A549 (cell line): ENCODE measurements at regions of chr20 and their contacts with region 1.

Region 1: DNA sequence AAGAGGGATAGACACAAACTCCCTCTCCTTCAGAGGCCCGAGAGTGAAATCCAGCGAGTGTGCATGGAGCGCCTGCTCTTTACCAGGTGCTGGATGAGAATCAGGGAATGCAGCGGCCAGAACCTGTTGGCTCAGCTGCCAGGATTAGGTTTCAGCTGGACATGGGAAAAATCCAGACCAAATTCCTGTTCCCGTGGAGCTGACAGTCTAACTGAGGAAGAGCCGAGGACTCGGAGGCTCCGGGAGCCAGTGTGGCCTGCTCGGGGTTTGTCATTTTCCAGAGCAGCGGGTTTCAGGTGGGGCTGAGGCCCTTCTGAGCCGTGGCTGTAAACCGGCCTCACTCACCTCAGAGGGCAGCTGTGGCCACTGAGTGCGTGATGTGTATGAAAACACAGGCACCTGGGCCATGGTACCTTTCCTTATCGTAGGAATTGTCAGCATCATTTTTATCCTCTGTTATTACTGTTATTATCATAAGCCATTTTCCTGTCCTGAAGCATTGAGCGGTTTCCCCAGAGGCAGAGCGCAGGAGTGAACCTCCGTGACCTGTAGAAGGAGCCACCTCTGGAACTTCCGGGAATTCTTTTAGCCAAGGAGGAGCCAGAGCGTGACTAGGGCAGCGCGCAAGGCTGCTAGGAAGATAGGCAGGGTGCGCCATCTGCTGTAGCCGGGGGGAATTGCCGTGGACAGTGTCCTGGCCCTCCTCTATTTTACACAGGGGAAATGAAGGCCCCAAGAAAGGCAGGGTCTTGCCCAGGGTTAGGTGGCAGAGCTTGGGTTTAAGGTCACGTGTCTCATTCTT is 27.3 kb downstream of the PKIG start:
- DNase-seq: peak; percentile 91 to 95
- ATAC-seq: peak; percentile 98 to 99
- H3K4me3 ChIP-seq: peak overlapping the region; percentile 29; the same call in 1 of the 3 replicates
- H3K27ac ChIP-seq: peak overlapping the region; percentile 76 to 85
- H3K4me1 ChIP-seq: peaks cover 11% of the 10 kb centered on the region
- CTCF ChIP-seq: peak; percentile 89
- EP300 ChIP-seq: no peak
- POLR2A ChIP-seq: peak; percentile 39; the same call in 1 of the 2 replicates
- RAD21 ChIP-seq: peak; percentile 96 to 98

Region 2: GRCh38 chr20:44475694-44476560 is 133.8 kb before region 1 on chr20 and contains the start of gene TTPAL:
- CTCF ChIA-PET with region 1: interaction called, 25 read pairs
- POLR2A ChIA-PET with region 1: interaction called, 13 read pairs
- DNase-seq: peak; percentile 81 to 88
- ATAC-seq: peak; percentile 98
- H3K4me3 ChIP-seq: peak within 1 kb of the TSS; percentile 92
- H3K27ac ChIP-seq: peak within 1 kb of the TSS; percentile 91 to 95
- H3K4me1 ChIP-seq: peaks cover 12% of the 10 kb centered on the region; the same call in 2 of the 3 replicates
- CTCF ChIP-seq: peak; percentile 20; the same call in 2 of the 3 replicates
- EP300 ChIP-seq: no peak
- POLR2A ChIP-seq: peak; percentile 99
- RAD21 ChIP-seq: peak; percentile 9 to 48; a peak in 2 of 5 replicates
- polyA plus RNA-seq, gene TTPAL: 9.2 and 11.0 TPM in 2 replicates

Region 3: DNA sequence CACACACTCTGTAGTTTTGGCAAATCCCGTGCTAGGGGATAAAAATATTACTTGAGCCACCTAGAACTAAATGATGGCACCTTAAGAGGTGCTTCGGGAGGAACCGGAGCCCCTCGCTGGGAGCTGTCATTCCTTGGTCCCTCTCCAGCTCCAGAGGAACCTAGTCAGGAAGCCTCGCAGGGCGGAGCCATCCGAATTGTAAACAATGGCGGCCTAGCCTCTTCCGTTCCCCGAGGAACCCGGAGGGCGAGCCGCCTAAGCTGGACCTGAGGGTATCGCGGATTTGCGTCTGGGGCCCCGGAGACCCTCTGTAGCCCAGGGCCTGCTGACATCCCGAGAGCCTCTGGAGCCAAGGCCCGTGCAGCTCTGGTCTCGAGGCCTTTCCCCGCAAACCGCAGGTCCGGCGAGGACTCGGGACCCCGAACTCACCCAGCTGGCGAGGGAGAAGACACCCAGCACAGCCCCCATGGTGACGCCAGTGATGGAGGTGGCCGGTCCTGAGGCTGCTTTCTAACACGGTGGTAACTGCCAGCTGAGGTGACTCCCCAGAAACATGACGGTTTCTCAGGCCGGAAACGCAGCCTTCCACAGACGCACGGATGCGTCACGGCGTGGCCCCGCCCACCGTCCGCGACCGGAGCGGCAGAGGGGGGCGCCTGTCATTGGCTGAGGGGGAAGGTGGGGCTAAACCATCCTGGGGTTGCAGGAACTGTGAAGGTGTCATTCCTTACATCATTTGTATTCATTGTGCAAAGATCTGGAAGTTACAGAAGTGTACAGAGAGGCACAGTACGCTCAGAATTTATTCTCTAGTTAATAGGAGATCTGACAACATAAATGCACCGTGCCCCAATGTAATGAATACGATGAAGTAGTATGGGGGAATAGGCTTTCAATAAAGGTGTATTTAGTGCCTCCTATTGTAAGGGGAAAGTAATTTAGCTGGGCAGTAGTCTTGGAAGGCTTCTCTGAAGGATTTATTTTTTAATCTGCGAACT is 87.9 kb before region 1 on chr20 and contains the start of gene SERINC3:
- CTCF ChIA-PET with region 1: interaction called, 19 read pairs
- POLR2A ChIA-PET with region 1: no interaction called
- DNase-seq: peak; percentile 94 to 95
- ATAC-seq: peak; percentile 99
- H3K4me3 ChIP-seq: peak within 1 kb of the TSS; percentile 100
- H3K27ac ChIP-seq: peak within 1 kb of the TSS; percentile 94 to 97
- H3K4me1 ChIP-seq: peaks cover 21% of the 10 kb centered on the region
- CTCF ChIP-seq: peak; percentile 52
- EP300 ChIP-seq: no peak
- POLR2A ChIP-seq: peak; percentile 63
- RAD21 ChIP-seq: peak in 1 of 2 experiments; percentile 38; a peak in 2 of 5 replicates
- polyA plus RNA-seq, gene SERINC3: 159 and 173 TPM in 2 replicates

Region 4: DNA sequence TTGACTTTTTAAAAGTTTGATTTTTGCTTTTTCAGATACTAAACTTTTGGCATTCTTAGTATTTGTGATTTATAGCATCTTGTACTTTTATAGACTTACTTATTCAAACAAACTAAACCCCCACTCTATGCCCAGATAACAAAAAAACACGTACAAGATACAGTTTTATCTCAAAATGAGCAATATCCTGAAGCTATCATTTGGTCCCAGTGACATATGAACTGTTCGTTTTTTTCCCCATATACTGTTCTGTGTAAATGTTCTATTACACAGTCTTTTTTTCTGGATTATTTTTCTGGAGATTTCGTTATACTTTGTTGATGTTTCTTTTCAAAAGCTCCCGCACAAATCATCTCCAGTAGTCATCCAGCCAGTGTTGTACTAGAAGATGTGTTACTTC is 60.6 kb before region 1 on chr20:
- CTCF ChIA-PET with region 1: interaction called, 13 read pairs
- POLR2A ChIA-PET with region 1: no interaction called
- DNase-seq: no peak
- ATAC-seq: no peak
- H3K4me3 ChIP-seq: no peak overlapping the region
- H3K27ac ChIP-seq: no peak overlapping the region
- H3K4me1 ChIP-seq: peaks cover 37% of the 10 kb centered on the region
- CTCF ChIP-seq: no peak
- EP300 ChIP-seq: no peak
- POLR2A ChIP-seq: no peak
- RAD21 ChIP-seq: no peak

Region 5: GRCh38 chr20:44598423-44599305 is 11.0 kb before region 1 on chr20:
- CTCF ChIA-PET with region 1: interaction called, 27 read pairs
- POLR2A ChIA-PET with region 1: interaction called, 3 read pairs
- DNase-seq: no peak
- ATAC-seq: peak in 1 of 2 experiments; percentile 49; a peak in 1 of 6 replicates
- H3K4me3 ChIP-seq: no peak overlapping the region
- H3K27ac ChIP-seq: peak overlapping the region in 1 of 2 experiments; percentile 8; a peak in 1 of 6 replicates
- H3K4me1 ChIP-seq: peaks cover 39% of the 10 kb centered on the region
- CTCF ChIP-seq: no peak
- EP300 ChIP-seq: no peak
- POLR2A ChIP-seq: no peak
- RAD21 ChIP-seq: no peak

Region 6: GRCh38 chr20:45300961-45301360 is 691.2 kb after region 1 on chr20:
- CTCF ChIA-PET with region 1: no interaction called
- POLR2A ChIA-PET with region 1: no interaction called
- DNase-seq: peak; percentile 69 to 71
- ATAC-seq: peak; percentile 86 to 99
- H3K4me3 ChIP-seq: no peak overlapping the region
- H3K27ac ChIP-seq: no peak overlapping the region
- H3K4me1 ChIP-seq: no peaks in the 10 kb centered on the region
- CTCF ChIP-seq: no peak
- EP300 ChIP-seq: no peak
- POLR2A ChIP-seq: no peak
- RAD21 ChIP-seq: no peak